ENCODE measurements at regions of chr17 and their contacts with region 1.

Region 1: DNA sequence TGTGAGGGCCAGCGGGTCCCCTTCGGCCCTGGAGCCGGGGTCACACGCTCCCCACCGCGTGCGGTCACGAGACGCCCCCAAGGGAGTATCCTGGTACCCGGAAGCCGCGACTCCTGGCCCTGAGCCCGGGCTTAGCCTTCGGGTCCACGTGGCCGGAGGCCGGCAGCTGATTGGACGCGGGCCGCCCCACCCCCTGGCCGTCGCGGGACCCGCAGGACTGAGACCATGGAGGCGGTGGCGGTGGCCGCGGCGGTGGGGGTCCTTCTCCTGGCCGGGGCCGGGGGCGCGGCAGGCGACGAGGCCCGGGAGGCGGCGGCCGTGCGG is at the start of gene NAGLU:
- DNase-seq: peak; percentile 86
- ATAC-seq: peak; percentile 90
- H3K4me3 Mint-ChIP-seq: peak within 1 kb of the TSS; percentile 74
- H3K27ac Mint-ChIP-seq: peak within 1 kb of the TSS; percentile 85
- H3K4me1 Mint-ChIP-seq: peaks cover 31% of the 10 kb centered on the region
- H3K27me3 Mint-ChIP-seq: peaks cover 22% of the 10 kb centered on the region
- CTCF ChIP-seq: no peak
- total RNA-seq, gene NAGLU: 28.9 to 39.3 TPM (median 30.4 TPM) in 3 replicates

Region 2: GRCh38 chr17:42472709-42473521 is 63.1 kb before region 1 on chr17:
- CTCF ChIA-PET with region 1: no interaction called
- POLR2A ChIA-PET with region 1: interaction called, 13 read pairs
- DNase-seq: no peak
- ATAC-seq: no peak
- H3K4me3 Mint-ChIP-seq: no peak overlapping the region
- H3K27ac Mint-ChIP-seq: no peak overlapping the region
- H3K4me1 Mint-ChIP-seq: no peaks in the 10 kb centered on the region
- H3K27me3 Mint-ChIP-seq: no peaks in the 10 kb centered on the region
- CTCF ChIP-seq: no peak

Region 3: GRCh38 chr17:42548070-42548837 is 12.2 kb after region 1 on chr17:
- CTCF ChIA-PET with region 1: interaction called, 65 read pairs
- POLR2A ChIA-PET with region 1: interaction called, 15 read pairs
- DNase-seq: peak; percentile 97
- ATAC-seq: peak; percentile 87
- H3K4me3 Mint-ChIP-seq: peak overlapping the region; percentile 59
- H3K27ac Mint-ChIP-seq: no peak overlapping the region
- H3K4me1 Mint-ChIP-seq: peaks cover 15% of the 10 kb centered on the region
- H3K27me3 Mint-ChIP-seq: peaks cover 2% of the 10 kb centered on the region; the same call in 1 of the 2 replicates
- CTCF ChIP-seq: no peak; the same call in 1 of the 2 replicates